ENCODE measurements at regions of chrX and their contacts with region 1.

Region 1: GRCh38 chrX:53317365-53318069 is 36.1 kb upstream of the IQSEC2 start:
- DNase-seq: no peak

Region 2: DNA sequence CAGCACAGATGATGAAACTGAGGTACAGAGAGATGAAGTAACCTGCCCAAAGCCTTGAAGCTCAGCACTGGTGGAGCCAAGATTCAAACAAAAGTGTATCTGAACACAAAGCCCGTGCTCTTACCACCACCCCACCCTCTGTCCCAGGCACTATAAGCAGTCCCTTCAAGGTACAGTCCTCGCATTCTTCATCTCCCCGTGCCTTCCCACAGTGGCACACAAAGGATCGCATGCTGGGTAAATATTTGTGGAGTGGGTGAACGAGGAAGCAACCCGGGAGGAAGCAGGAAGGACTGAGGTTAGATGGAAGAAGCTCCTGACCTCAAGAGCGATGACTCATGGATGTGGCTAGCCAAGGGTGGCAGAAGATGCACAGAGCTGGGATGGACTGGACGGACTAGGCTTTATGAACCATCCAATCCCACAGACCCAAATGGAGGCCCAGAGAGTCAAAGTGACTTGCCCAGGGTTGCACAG is 54.6 kb before region 1 on chrX:
- intact Hi-C with region 1: no loop called
- DNase-seq: no peak

Region 3: GRCh38 chrX:53294024-53294648 is 23.4 kb before region 1 on chrX:
- intact Hi-C with region 1: no loop called
- DNase-seq: no peak

Region 4: GRCh38 chrX:53433651-53434639 is 116.4 kb after region 1 on chrX and contains the start of gene HSD17B10:
- intact Hi-C with region 1: loop called in 1 of 2 experiments (anchors 10 kb)
- DNase-seq: peak; percentile 97
- total RNA-seq, gene HSD17B10: 67.7 to 72.7 TPM

Region 5: GRCh38 chrX:53481816-53482465 is 164.4 kb after region 1 on chrX:
- intact Hi-C with region 1: loop called in 1 of 2 experiments (anchors 10 kb)
- DNase-seq: no peak